GM12878 (cell line): ENCODE measurements at regions of chr1 and their contacts with region 1.

Region 1: DNA sequence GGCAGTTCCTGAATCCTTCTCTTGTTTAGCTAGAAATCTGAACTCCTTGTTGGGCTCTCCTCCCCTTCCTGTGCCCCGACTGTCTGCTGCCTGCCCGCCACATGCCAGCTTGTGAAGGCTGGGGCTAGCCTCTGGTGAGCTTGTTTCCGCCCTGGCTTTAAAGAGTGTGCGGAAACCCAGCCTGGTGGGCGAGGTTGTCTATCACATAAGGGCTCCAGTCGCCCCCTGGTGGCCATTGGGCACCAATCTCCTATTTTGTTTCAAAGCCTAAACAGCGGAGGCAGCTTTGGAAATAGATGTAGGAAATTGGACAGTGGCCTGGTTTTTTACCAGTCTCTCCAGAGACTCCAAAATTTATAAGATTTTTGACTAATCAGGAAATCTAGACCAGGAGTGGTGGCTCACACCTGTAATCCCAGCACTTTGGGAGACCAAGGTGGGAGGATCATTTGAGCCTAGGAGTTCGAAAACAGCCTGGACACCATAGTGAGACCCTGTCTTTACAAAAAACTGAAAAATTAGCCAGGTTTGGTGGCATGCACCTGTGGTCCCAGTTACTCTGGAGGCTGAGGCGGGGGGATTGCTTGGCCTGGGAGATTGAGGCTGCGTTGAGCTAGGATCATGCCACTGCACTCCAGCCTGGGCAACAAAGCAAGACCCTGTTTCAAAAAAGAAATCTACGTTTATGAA is 9.8 kb downstream of the ATP8B2 start:
- DNase-seq: no peak
- ATAC-seq: peak; percentile 99
- H3K4me3 ChIP-seq: no peak overlapping the region
- H3K27ac ChIP-seq: no peak overlapping the region
- H3K4me1 ChIP-seq: no peaks in the 10 kb centered on the region
- H3K27me3 ChIP-seq: no peaks in the 10 kb centered on the region
- CTCF ChIP-seq: peak; percentile 75 to 88 (median 84)
- EP300 ChIP-seq: no peak
- POLR2A ChIP-seq: no peak
- RAD21 ChIP-seq: peak; percentile 77

Region 2: DNA sequence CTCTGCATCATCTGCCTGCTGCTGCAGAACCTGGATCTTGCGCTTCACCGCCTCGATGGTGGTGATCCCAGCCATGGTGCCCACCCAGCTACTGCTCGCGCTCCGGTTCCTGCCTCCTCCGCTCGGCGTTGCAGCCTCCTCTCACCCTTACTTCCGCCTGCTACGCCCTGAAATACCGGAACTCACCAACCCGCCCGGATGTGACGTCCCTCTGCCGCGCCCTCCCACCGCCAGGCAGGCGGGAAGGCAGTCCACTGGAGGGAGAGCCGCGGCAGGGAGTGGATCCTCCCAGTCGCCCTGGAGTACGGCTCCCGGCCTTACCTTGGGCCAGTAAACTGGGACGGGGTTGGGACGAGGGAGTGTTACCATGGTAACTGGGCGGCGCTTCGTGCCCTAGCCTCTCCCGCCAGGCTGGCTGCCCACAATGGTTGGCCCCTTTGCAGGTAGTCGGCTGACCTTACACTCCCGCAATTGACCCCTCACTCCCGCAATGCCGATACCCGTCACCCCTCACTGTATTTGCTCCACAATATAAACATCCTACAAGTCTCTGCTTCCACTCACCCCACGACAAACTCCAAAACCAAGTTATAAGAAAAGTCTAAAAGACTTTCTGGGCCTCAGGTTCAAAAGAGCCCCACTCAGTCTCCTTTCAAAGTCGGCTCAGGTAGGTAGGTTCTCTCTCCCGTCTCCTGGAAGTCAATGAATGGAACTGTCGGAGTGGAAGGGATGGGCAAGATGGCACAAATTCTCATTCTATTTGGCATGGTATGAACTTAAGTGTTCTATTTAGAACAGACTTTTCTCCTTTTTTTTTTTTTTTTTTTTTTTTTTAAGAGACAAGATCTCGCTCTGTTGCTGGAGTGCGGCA is 151.9 kb before region 1 on chr1:
- CTCF ChIA-PET with region 1: interaction called, 12 read pairs
- POLR2A ChIA-PET with region 1: interaction called, 3 read pairs
- RAD21 ChIA-PET with region 1: interaction called, 6 read pairs
- SMC1A ChIA-PET with region 1: interaction called, 3 read pairs
- in situ Hi-C with region 1: loop called (anchors 10 kb)
- intact Hi-C with region 1: loop called (anchors 1 kb)
- DNase-seq: peak; percentile 73
- ATAC-seq: peak; percentile 81
- H3K4me3 ChIP-seq: peak overlapping the region; percentile 99
- H3K27ac ChIP-seq: peak overlapping the region; percentile 94
- H3K4me1 ChIP-seq: peaks cover 14% of the 10 kb centered on the region
- H3K27me3 ChIP-seq: no peaks in the 10 kb centered on the region
- CTCF ChIP-seq: no peak
- EP300 ChIP-seq: no peak
- POLR2A ChIP-seq: peak; percentile 98
- RAD21 ChIP-seq: no peak

Region 3: GRCh38 chr1:154272217-154272998 is 62.8 kb before region 1 on chr1 and contains the start of gene HAX1:
- CTCF ChIA-PET with region 1: interaction called, 46 read pairs
- POLR2A ChIA-PET with region 1: interaction called, 5 read pairs
- RAD21 ChIA-PET with region 1: interaction called, 11 read pairs
- SMC1A ChIA-PET with region 1: interaction called, 16 read pairs
- in situ Hi-C with region 1: no loop called
- intact Hi-C with region 1: loop called (anchors 1 kb)
- DNase-seq: peak; percentile 100
- ATAC-seq: peak; percentile 96
- H3K4me3 ChIP-seq: peak within 1 kb of the TSS; percentile 99
- H3K27ac ChIP-seq: peak within 1 kb of the TSS; percentile 89
- H3K4me1 ChIP-seq: peaks cover 10% of the 10 kb centered on the region
- H3K27me3 ChIP-seq: no peaks in the 10 kb centered on the region
- CTCF ChIP-seq: peak; percentile 76 to 93 (median 84); a peak in 5 of 6 replicates
- EP300 ChIP-seq: peak in 1 of 2 experiments; percentile 64; a peak in 2 of 4 replicates
- POLR2A ChIP-seq: peak; percentile 86
- RAD21 ChIP-seq: peak; percentile 88
- polyA plus RNA-seq, gene HAX1: 249 to 288 TPM

Region 4: GRCh38 chr1:154324669-154325582 is 10.2 kb before region 1 on chr1 and contains the start of gene ATP8B2:
- CTCF ChIA-PET with region 1: interaction called, 104 read pairs
- POLR2A ChIA-PET with region 1: interaction called, 5 read pairs
- RAD21 ChIA-PET with region 1: interaction called, 43 read pairs
- SMC1A ChIA-PET with region 1: interaction called, 39 read pairs
- in situ Hi-C with region 1: no loop called
- intact Hi-C with region 1: no loop called
- DNase-seq: no peak
- ATAC-seq: peak; percentile 74
- H3K4me3 ChIP-seq: peak within 1 kb of the TSS; percentile 91
- H3K27ac ChIP-seq: peak within 1 kb of the TSS; percentile 42
- H3K4me1 ChIP-seq: peaks cover 23% of the 10 kb centered on the region
- H3K27me3 ChIP-seq: no peaks in the 10 kb centered on the region
- CTCF ChIP-seq: peak; percentile 92 to 94 (median 92)
- EP300 ChIP-seq: no peak
- POLR2A ChIP-seq: no peak; the same call in 1 of the 2 replicates
- RAD21 ChIP-seq: peak; percentile 54
- polyA plus RNA-seq, gene ATP8B2: 0.44 to 0.82 TPM

Region 5: GRCh38 chr1:154386643-154387352 is 51.6 kb after region 1 on chr1:
- CTCF ChIA-PET with region 1: interaction called, 11 read pairs
- POLR2A ChIA-PET with region 1: interaction called, 3 read pairs
- RAD21 ChIA-PET with region 1: interaction called, 3 read pairs
- SMC1A ChIA-PET with region 1: interaction called, 6 read pairs
- in situ Hi-C with region 1: no loop called
- intact Hi-C with region 1: no loop called
- DNase-seq: no peak
- ATAC-seq: peak; percentile 91
- H3K4me3 ChIP-seq: no peak overlapping the region
- H3K27ac ChIP-seq: no peak overlapping the region
- H3K4me1 ChIP-seq: no peaks in the 10 kb centered on the region; the same call in 1 of the 2 replicates
- H3K27me3 ChIP-seq: no peaks in the 10 kb centered on the region
- CTCF ChIP-seq: no peak
- EP300 ChIP-seq: no peak
- POLR2A ChIP-seq: no peak
- RAD21 ChIP-seq: no peak

Region 6: GRCh38 chr1:154463512-154463990 is 128.4 kb after region 1 on chr1:
- CTCF ChIA-PET with region 1: interaction called, 19 read pairs
- POLR2A ChIA-PET with region 1: no interaction called
- RAD21 ChIA-PET with region 1: interaction called, 18 read pairs
- SMC1A ChIA-PET with region 1: interaction called, 11 read pairs
- in situ Hi-C with region 1: no loop called
- intact Hi-C with region 1: no loop called
- DNase-seq: peak; percentile 46
- ATAC-seq: peak; percentile 42
- H3K4me3 ChIP-seq: no peak overlapping the region
- H3K27ac ChIP-seq: no peak overlapping the region
- H3K4me1 ChIP-seq: peaks cover 20% of the 10 kb centered on the region
- H3K27me3 ChIP-seq: no peaks in the 10 kb centered on the region
- CTCF ChIP-seq: no peak
- EP300 ChIP-seq: no peak
- POLR2A ChIP-seq: no peak
- RAD21 ChIP-seq: no peak